T-cell (primary cell): ENCODE measurements at regions of chr2 and their contacts with region 1.

Region 1: DNA sequence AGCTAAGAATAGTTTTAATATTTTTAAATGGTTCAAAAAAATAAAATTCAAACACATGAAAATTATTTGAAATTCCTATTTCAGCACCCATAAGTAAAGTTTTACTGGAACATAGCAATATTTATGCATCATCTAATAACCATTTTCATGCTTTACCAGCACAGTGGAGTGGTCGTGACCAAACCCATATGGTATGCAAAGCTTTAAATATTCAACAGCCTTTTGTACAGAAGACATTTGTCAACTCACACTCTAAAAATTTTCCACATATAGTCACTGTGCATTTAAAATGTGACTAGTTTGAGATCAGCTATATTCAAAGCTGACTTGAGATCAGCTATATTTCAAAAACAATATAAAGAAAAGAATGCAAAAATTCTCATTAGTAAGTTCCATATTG is 46.2 kb downstream of the PUM2 start:
- DNase-seq: no peak
- ATAC-seq: no peak
- H3K4me3 ChIP-seq: no peak overlapping the region
- H3K4me3 Mint-ChIP-seq: no peak overlapping the region
- H3K27ac ChIP-seq: no peak overlapping the region
- H3K27ac Mint-ChIP-seq: no peak overlapping the region
- H3K4me1 ChIP-seq: no peaks in the 10 kb centered on the region
- H3K4me1 Mint-ChIP-seq: peaks cover 17 to 27% (median 18%) of the 10 kb centered on the region in 3 donors
- H3K27me3 ChIP-seq: no peaks in the 10 kb centered on the region
- H3K27me3 Mint-ChIP-seq: no peaks in the 10 kb centered on the region

Region 2: GRCh38 chr2:20225294-20226151 is 78.9 kb before region 1 on chr2:
- CTCF ChIA-PET with region 1: no interaction called
- POLR2A ChIA-PET with region 1: no interaction called
- DNase-seq: peak in 8 of 35 experiments; percentile 4 to 21 (median 12)
- ATAC-seq: peak; percentile 39 to 55 (median 48)
- H3K4me3 ChIP-seq: peak overlapping the region in 1 of 2 donors; percentile 19
- H3K4me3 Mint-ChIP-seq: peak overlapping the region; percentile 41 to 66 (median 51)
- H3K27ac ChIP-seq: no peak overlapping the region
- H3K27ac Mint-ChIP-seq: no peak overlapping the region
- H3K4me1 ChIP-seq: peaks cover 0 to 21% of the 10 kb centered on the region in 2 experiments
- H3K4me1 Mint-ChIP-seq: peaks cover 0 to 12% (median 10%) of the 10 kb centered on the region in 3 donors
- H3K27me3 ChIP-seq: peaks cover 9 to 57% of the 10 kb centered on the region in 2 experiments
- H3K27me3 Mint-ChIP-seq: peaks cover 42 to 64% of the 10 kb centered on the region in 2 donors

Region 3: DNA sequence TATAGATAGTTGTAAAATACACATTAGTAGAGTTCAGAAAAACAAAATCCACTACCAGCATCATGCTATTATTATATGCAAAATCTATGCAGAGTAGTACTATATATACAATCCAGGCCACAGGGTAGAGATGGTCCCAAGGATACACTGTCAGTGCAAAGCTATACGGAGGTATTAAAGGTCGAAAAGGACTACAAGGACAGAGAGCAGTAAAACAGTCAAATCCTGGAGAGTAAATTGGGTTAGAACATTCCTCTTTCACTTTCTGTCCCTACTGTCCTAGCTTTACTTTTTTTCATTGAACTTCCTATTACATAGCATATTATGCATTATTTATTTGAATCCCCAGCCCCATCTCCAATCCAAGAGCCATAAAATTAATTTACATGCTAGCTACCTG is 39.8 kb before region 1 on chr2:
- CTCF ChIA-PET with region 1: no interaction called
- POLR2A ChIA-PET with region 1: no interaction called
- DNase-seq: no peak
- ATAC-seq: no peak
- H3K4me3 ChIP-seq: no peak overlapping the region
- H3K4me3 Mint-ChIP-seq: no peak overlapping the region
- H3K27ac ChIP-seq: no peak overlapping the region
- H3K27ac Mint-ChIP-seq: peak overlapping the region in 1 of 2 donors; percentile 48
- H3K4me1 ChIP-seq: no peaks in the 10 kb centered on the region
- H3K4me1 Mint-ChIP-seq: peaks cover 0 to 10% (median 6%) of the 10 kb centered on the region in 3 donors
- H3K27me3 ChIP-seq: no peaks in the 10 kb centered on the region
- H3K27me3 Mint-ChIP-seq: no peaks in the 10 kb centered on the region

Region 4: GRCh38 chr2:20350753-20351554 is 46.5 kb after region 1 on chr2 and contains the start of gene PUM2:
- CTCF ChIA-PET with region 1: interaction called in 1 of 2 experiments, 10 read pairs
- POLR2A ChIA-PET with region 1: no interaction called
- DNase-seq: peak; percentile 91 to 99 (median 95)
- ATAC-seq: peak; percentile 79 to 90 (median 82)
- H3K4me3 ChIP-seq: peak within 1 kb of the TSS; percentile 78 to 86
- H3K4me3 Mint-ChIP-seq: peak within 1 kb of the TSS in 2 of 3 donors; percentile 92 to 93
- H3K27ac ChIP-seq: peak within 1 kb of the TSS; percentile 84
- H3K27ac Mint-ChIP-seq: peak within 1 kb of the TSS; percentile 81 to 83
- H3K4me1 ChIP-seq: peaks cover 38 to 43% of the 10 kb centered on the region in 2 experiments
- H3K4me1 Mint-ChIP-seq: peaks cover 38 to 43% (median 38%) of the 10 kb centered on the region in 3 donors
- H3K27me3 ChIP-seq: no peaks in the 10 kb centered on the region
- H3K27me3 Mint-ChIP-seq: no peaks in the 10 kb centered on the region
- total RNA-seq, gene PUM2: 128 to 154 (median 138) TPM